ENCODE measurements at regions of chr7 and their contacts with region 1.

Region 1: GRCh38 chr7:6232534-6233300 is 39.7 kb downstream of the CYTH3 start:
- DNase-seq: peak; percentile 8
- H3K4me3 ChIP-seq: peak overlapping the region; percentile 11
- H3K27ac ChIP-seq: no peak overlapping the region
- H3K4me1 ChIP-seq: peaks cover 28% of the 10 kb centered on the region
- CTCF ChIP-seq: no peak

Region 2: GRCh38 chr7:5704534-5704922 is 528.2 kb before region 1 on chr7:
- CTCF ChIA-PET with region 1: no interaction called
- POLR2A ChIA-PET with region 1: no interaction called
- intact Hi-C with region 1: no loop called
- DNase-seq: peak; percentile 74
- H3K4me3 ChIP-seq: no peak overlapping the region
- H3K27ac ChIP-seq: no peak overlapping the region
- H3K4me1 ChIP-seq: peaks cover 22% of the 10 kb centered on the region
- CTCF ChIP-seq: peak; percentile 98

Region 3: GRCh38 chr7:6175645-6176044 is 57.1 kb before region 1 on chr7:
- CTCF ChIA-PET with region 1: no interaction called
- POLR2A ChIA-PET with region 1: no interaction called
- intact Hi-C with region 1: no loop called
- DNase-seq: no peak
- H3K4me3 ChIP-seq: no peak overlapping the region
- H3K27ac ChIP-seq: no peak overlapping the region
- H3K4me1 ChIP-seq: no peaks in the 10 kb centered on the region
- CTCF ChIP-seq: no peak

Region 4: DNA sequence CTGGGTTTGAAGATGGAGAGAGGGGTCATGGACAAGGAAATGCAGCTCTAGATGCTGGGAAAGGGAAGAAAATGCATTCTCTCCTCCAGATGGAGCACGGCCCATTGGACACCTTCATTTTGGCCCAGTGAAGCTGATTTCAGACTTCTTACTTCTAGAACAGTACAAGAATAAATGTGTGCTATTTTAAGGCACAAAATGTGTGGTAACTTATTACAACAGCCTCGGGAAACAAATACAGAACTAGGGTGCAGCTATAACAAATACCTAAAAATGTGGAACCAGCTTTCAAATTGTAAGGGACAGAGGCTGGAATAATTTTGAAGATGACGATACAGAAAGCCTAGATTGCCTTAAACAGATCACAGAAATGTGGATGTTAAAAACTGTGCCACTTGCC is 14.4 kb before region 1 on chr7:
- CTCF ChIA-PET with region 1: no interaction called
- POLR2A ChIA-PET with region 1: no interaction called
- intact Hi-C with region 1: loop called (anchors 2 kb)
- DNase-seq: no peak
- H3K4me3 ChIP-seq: no peak overlapping the region
- H3K27ac ChIP-seq: no peak overlapping the region
- H3K4me1 ChIP-seq: no peaks in the 10 kb centered on the region
- CTCF ChIP-seq: no peak

Measured in OCI-LY7 (cell line).